Activated CD8-positive, alpha-beta T cell treated with anti-CD3 and anti-CD28 coated beads for 36 hours (primary cell): ENCODE measurements at regions of chr4 and their contacts with region 1.

Region 1: GRCh38 chr4:168514249-168514852 is 17.5 kb downstream of the PALLD start:
- DNase-seq: peak; percentile 13
- ATAC-seq: no peak
- H3K4me3 Mint-ChIP-seq: no peak overlapping the region
- H3K27ac Mint-ChIP-seq: no peak overlapping the region
- H3K4me1 Mint-ChIP-seq: peaks cover 32% of the 10 kb centered on the region
- H3K27me3 Mint-ChIP-seq: no peaks in the 10 kb centered on the region
- CTCF ChIP-seq: peak; percentile 54

Region 2: DNA sequence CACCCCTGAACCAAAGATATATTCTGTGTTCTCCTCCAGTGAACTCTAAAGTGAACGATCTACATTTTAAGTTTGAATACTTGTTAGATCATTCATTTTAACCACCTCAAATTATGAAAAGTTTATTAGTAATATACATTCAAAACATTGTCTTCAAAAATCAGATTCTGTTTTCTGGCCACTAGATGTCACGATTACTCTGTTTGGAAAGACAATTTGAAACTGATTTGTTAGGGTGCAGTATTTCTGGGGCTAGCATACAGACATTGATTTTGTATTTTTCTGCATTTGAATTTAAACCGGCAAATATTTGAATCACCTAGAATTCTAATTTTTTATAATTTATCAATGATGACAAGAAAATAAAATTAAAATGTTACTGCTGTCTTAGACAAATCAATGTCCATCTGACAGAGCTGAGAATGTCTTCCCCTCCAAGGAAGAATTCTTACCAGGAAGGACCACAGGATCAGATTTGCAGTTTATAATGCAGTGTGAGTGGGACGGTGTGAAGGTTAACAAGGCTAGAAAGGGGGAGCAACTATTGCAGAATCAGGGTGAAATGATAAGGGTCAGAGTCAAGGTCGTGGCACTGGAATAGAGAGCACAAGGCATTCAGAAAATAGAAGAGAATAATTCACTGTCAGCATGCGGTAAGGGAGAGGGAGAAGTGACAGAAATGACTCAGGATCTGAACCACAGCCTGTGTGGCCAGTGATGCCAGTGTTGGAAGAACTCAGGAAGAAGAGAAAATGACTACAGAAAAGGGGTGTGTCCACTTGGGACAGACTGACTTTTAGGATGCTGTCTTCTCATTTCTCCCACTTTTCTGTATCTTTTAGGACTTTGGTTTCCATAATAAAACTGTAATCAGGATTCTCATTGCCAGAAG is 330.4 kb before region 1 on chr4:
- CTCF ChIA-PET with region 1: no interaction called
- POLR2A ChIA-PET with region 1: no interaction called
- intact Hi-C with region 1: loop called (anchors 10 kb)
- DNase-seq: no peak
- ATAC-seq: no peak
- H3K4me3 Mint-ChIP-seq: no peak overlapping the region
- H3K27ac Mint-ChIP-seq: no peak overlapping the region
- H3K4me1 Mint-ChIP-seq: no peaks in the 10 kb centered on the region
- H3K27me3 Mint-ChIP-seq: no peaks in the 10 kb centered on the region
- CTCF ChIP-seq: peak; percentile 77